ENCODE measurements at regions of chr3 and their contacts with region 1.

Region 1: DNA sequence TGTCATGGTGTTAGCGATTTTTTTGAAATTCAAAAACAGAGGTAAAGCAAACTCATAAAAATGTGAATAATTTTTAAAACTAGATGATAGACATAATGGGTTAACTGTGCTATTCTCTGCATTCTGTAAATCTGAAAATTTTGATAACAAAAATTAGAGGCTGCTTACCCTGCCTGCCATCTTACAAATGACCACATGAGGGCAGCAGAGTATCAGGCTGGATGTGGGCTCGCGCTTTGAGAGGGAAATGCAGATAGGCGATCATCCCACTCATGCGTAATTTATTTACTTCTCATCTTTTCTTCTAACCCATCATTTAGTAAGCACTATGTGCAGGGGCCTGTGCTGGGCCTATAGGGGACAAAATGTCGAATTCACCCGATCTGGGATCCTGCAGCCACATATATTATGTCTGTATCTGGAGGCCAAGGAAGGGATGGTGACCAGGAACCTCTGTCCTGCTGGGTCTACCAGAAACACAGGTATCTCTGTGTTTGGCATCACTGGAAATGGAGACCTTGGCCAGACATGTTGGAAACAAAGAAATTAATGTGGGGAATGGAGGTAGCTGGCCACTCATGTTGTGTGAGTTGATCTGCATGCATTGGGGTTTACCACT is 7.8 kb upstream of the RAD18 start:
- DNase-seq: peak; percentile 85
- H3K4me3 Mint-ChIP-seq: no peak overlapping the region
- H3K27ac Mint-ChIP-seq: no peak overlapping the region
- H3K4me1 Mint-ChIP-seq: peaks cover 2% of the 10 kb centered on the region
- H3K27me3 Mint-ChIP-seq: no peaks in the 10 kb centered on the region

Region 2: GRCh38 chr3:8891303-8891702 is 79.8 kb before region 1 on chr3:
- CTCF ChIA-PET with region 1: no interaction called
- intact Hi-C with region 1: no loop called
- DNase-seq: no peak
- H3K4me3 Mint-ChIP-seq: no peak overlapping the region
- H3K27ac Mint-ChIP-seq: no peak overlapping the region
- H3K4me1 Mint-ChIP-seq: no peaks in the 10 kb centered on the region
- H3K27me3 Mint-ChIP-seq: no peaks in the 10 kb centered on the region

Region 3: DNA sequence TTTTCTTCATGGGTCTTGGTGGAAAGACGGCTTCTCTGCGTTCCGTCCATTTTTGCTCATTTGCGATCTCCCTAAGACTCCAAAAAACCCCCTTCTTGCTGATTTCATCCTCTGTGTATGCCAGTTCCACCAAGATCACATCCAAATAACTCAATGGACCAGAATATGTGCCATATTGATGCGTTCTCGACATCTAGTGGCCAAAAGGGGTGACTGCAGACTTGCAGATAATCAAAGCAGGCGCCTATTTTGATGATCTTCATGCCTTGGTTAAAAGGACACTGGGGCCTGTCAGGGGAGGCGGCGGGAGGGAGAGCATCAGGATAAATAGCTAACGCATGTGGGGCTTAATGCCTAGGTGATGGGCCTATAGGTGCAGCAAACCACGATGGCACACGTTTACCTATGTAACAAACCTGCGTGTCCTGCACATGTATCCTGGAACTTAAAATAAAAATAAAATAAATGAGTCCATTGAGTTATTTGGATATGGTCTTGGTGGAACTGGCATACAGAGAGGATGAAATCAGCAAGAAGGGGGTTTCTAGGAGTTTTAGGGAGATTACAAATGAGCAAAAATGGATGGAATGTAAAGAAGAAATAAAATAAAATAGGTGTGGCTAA is 96.4 kb after region 1 on chr3:
- CTCF ChIA-PET with region 1: interaction called, 4 read pairs
- intact Hi-C with region 1: loop called (anchors 1 kb)
- DNase-seq: peak; percentile 57
- H3K4me3 Mint-ChIP-seq: no peak overlapping the region
- H3K27ac Mint-ChIP-seq: no peak overlapping the region
- H3K4me1 Mint-ChIP-seq: no peaks in the 10 kb centered on the region
- H3K27me3 Mint-ChIP-seq: no peaks in the 10 kb centered on the region

Region 4: GRCh38 chr3:9249273-9250192 is 278.5 kb after region 1 on chr3 and contains the start of gene SRGAP3:
- CTCF ChIA-PET with region 1: interaction called, 7 read pairs
- intact Hi-C with region 1: loop called (anchors 1 kb)
- DNase-seq: peak; percentile 86
- H3K4me3 Mint-ChIP-seq: peak within 1 kb of the TSS; percentile 77
- H3K27ac Mint-ChIP-seq: peak within 1 kb of the TSS; percentile 28
- H3K4me1 Mint-ChIP-seq: peaks cover 17% of the 10 kb centered on the region
- H3K27me3 Mint-ChIP-seq: no peaks in the 10 kb centered on the region
- total RNA-seq, gene SRGAP3: 2.4 to 2.5 TPM

Measured in activated naive CD4-positive, alpha-beta T cell treated with anti-CD3 and anti-CD28 coated beads for 36 hours (primary cell).